ENCODE measurements at regions of chr2 and their contacts with region 1.

Region 1: DNA sequence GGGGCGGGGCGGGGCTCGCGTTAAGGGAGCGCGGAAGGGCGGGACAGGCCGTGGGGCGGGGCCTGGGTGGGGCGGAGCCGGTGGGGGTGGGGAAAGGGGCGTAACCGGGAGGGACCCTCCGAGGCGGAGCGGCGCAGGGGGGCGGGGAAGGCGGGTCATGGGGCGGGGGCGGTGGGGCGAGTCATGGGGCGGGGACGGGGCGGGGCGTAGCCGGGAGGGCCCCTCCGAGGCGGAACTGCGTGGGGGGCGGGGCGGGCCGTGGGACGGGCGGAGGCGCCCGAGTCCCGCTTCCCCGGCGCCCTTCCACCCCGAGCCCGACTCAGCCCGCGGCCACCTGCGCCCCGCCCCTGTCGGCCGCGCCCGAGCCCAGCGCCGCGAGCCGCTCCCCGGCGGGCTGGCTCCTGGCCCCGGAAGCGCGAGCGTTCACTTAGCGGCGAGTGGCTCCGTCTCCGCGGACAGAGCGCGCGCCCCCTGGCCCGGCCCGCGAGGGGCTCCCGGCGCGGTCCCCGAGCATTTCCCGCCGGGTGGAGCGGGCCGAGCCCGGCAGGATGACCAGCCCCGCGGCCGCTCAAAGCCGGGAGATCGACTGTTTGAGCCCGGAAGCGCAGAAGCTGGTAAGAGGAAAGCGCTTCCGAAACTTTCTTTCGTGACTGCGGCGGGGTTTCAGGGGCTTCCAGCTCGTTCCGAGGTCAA is 64.7 kb downstream of the LRRFIP1 start:
- DNase-seq: peak; percentile 90 to 93
- ATAC-seq: peak; percentile 46 to 49
- H3K4me3 ChIP-seq: peak overlapping the region; percentile 73 to 96 (median 88)
- H3K27ac ChIP-seq: peak overlapping the region; percentile 94 to 98 (median 96)
- H3K4me1 ChIP-seq: peaks cover 76 to 83% of the 10 kb centered on the region in 2 donors
- H3K27me3 ChIP-seq: no peaks in the 10 kb centered on the region
- CTCF ChIP-seq: peak in 1 of 5 experiments; percentile 19
- POLR2A ChIP-seq: peak; percentile 89

Region 2: DNA sequence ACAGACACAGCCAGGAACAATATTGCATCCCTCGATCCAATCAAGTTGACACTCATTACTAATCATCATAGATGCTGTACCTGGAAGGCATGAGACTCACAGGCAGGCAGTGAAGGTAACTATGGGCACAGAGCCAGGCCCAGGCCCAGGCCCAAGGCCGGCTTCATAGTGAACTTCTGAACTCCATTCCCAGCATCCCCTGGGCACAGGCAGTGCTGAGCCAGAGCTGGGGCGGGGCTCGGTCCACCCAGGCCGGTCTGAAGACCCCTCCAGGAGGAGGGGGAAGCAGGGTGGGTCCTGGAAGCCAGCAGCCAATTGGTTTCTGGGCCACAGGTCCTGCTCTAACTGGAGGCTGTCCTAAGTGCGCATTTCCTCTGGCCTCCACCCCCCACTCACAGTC is 167.4 kb before region 1 on chr2:
- in situ Hi-C with region 1: no loop called
- intact Hi-C with region 1: no loop called
- DNase-seq: no peak
- ATAC-seq: no peak
- H3K4me3 ChIP-seq: no peak overlapping the region
- H3K27ac ChIP-seq: no peak overlapping the region
- H3K4me1 ChIP-seq: no peaks in the 10 kb centered on the region
- H3K27me3 ChIP-seq: no peaks in the 10 kb centered on the region
- CTCF ChIP-seq: no peak
- POLR2A ChIP-seq: no peak

Region 3: GRCh38 chr2:237674731-237675276 is 17.2 kb before region 1 on chr2:
- in situ Hi-C with region 1: no loop called
- intact Hi-C with region 1: loop called (anchors 2 kb)
- DNase-seq: peak in 1 of 2 donors; percentile 78
- ATAC-seq: peak; percentile 30 to 41
- H3K4me3 ChIP-seq: peak overlapping the region; percentile 34 to 44 (median 39)
- H3K27ac ChIP-seq: peak overlapping the region; percentile 76 to 85 (median 84)
- H3K4me1 ChIP-seq: peaks cover 81 to 83% of the 10 kb centered on the region in 2 donors
- H3K27me3 ChIP-seq: no peaks in the 10 kb centered on the region
- CTCF ChIP-seq: peak in 3 of 5 experiments; percentile 17 to 35 (median 34)
- POLR2A ChIP-seq: peak in 1 of 2 donors; percentile 13

Region 4: GRCh38 chr2:237731663-237732062 is 39.6 kb after region 1 on chr2:
- in situ Hi-C with region 1: no loop called
- intact Hi-C with region 1: loop called (anchors 5 kb)
- DNase-seq: peak in 1 of 2 donors; percentile 57
- ATAC-seq: peak; percentile 61 to 69
- H3K4me3 ChIP-seq: no peak overlapping the region
- H3K27ac ChIP-seq: peak overlapping the region; percentile 80 to 89 (median 86)
- H3K4me1 ChIP-seq: peaks cover 58 to 67% of the 10 kb centered on the region in 2 donors
- H3K27me3 ChIP-seq: no peaks in the 10 kb centered on the region
- CTCF ChIP-seq: no peak
- POLR2A ChIP-seq: peak in 1 of 2 donors; percentile 7